Calu3 (cell line): ENCODE measurements at regions of chr5 and their contacts with region 1.

Region 1: DNA sequence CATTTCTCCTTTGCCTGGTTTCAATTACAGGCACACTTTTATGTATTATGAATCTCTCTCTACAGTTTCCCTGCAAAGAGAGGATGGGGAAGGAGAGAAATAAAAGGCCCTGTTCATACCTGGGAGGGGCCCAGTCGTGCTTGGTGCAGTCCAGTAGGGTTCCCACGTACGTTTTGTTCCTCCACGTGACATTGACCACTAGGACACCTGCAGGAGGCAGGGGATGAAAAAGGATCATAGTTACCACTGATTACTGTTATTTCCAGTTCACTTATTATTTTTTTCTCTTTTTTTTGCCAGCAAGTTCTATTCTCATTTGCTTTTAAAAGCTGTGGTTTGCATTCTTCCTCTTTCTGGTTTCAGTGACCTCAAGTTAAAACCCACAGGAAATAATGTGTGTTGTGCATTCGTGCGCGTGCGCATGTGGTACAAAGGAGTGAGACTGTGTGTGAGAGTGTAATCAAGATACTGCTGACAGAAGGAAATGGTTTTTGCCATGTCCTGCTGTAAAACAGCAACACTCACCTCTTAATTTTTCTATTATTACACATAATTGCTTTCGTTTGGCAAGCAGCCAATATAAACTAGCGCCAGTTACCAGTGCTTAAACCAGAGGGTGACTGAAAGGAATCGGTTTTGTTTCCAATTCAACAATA is 96.8 kb downstream of the ZNF608 start:
- DNase-seq: peak; percentile 75
- H3K4me3 Mint-ChIP-seq: peak overlapping the region; percentile 92
- H3K27ac Mint-ChIP-seq: peak overlapping the region; percentile 83
- H3K4me1 Mint-ChIP-seq: peaks cover 60% of the 10 kb centered on the region
- H3K27me3 Mint-ChIP-seq: no peaks in the 10 kb centered on the region
- CTCF ChIP-seq: no peak

Region 2: DNA sequence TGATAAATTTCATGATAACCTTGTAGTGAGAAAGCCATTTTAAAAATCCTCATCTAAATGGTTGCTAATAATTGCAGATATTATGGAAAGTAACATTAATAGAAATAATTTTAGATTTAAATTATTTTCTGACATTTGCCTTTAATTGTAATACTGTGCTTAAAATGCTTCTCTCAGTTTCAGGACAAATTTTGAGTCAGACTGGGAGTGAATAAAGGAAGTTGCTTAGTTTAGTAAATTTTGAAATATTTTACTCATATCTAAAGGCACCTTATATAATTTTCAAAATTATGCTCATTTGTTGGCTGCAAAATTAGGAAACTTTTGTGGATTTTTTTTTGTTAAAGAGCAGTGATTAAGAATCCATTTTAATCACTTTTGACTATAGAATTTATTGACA is 1043.8 kb before region 1 on chr5:
- CTCF ChIA-PET with region 1: no interaction called
- intact Hi-C with region 1: no loop called
- DNase-seq: no peak
- H3K4me3 Mint-ChIP-seq: no peak overlapping the region
- H3K27ac Mint-ChIP-seq: no peak overlapping the region
- H3K4me1 Mint-ChIP-seq: no peaks in the 10 kb centered on the region
- H3K27me3 Mint-ChIP-seq: no peaks in the 10 kb centered on the region
- CTCF ChIP-seq: no peak

Region 3: GRCh38 chr5:123671042-123671441 is 978.6 kb before region 1 on chr5:
- CTCF ChIA-PET with region 1: no interaction called
- intact Hi-C with region 1: loop called (anchors 5 kb)
- DNase-seq: peak; percentile 47
- H3K4me3 Mint-ChIP-seq: no peak overlapping the region
- H3K27ac Mint-ChIP-seq: no peak overlapping the region
- H3K4me1 Mint-ChIP-seq: no peaks in the 10 kb centered on the region
- H3K27me3 Mint-ChIP-seq: no peaks in the 10 kb centered on the region
- CTCF ChIP-seq: peak; percentile 77

Region 4: GRCh38 chr5:123951186-123951977 is 698.2 kb before region 1 on chr5:
- CTCF ChIA-PET with region 1: no interaction called
- intact Hi-C with region 1: loop called (anchors 10 kb)
- DNase-seq: peak; percentile 65
- H3K4me3 Mint-ChIP-seq: peak overlapping the region; percentile 16
- H3K27ac Mint-ChIP-seq: no peak overlapping the region
- H3K4me1 Mint-ChIP-seq: peaks cover 19% of the 10 kb centered on the region
- H3K27me3 Mint-ChIP-seq: peaks cover 37% of the 10 kb centered on the region
- CTCF ChIP-seq: no peak

Region 5: DNA sequence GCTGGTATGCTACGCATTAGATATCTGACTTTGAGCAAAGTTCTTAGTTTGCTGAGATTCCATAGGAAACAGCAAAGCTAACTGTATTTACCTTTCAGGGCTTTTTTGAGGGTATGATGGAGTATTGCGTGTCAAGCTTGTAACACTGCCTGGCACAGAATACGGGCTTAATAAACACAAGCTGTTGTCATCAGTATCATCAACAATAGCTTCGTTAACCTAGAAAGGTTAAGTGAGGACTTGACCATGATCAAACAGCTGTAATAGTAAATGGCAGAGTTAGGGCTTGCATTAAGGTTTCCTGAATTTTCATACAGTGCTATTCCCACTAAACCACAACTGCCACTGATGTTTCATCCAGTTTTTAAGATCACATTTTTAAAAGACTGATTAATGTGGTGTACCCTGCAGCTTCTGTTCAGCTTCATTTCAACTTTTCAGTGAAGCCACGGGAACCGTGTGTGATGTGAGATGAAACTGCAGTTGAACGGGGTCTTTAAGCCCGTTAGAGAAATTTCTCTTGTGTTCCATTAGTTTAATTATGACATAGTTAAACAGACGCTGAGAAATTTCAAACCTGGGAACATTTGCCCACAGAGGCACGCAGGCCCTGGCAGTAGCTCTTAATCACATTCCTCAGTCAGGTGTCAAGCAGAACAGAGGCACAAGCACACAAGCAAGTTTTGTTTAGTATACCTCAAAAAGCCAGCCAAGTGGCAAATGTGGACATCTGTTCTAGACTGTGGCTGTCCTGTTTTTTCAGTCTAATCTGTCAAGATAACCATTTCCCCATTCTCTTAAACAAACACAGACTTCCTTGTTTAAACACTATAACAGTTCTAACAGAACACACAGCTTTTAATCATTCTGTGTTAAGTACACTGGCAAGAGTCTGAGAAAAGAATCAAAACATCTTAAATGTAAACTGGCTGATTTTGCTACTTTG is 50.3 kb before region 1 on chr5:
- CTCF ChIA-PET with region 1: no interaction called
- intact Hi-C with region 1: loop called (anchors 2 kb)
- DNase-seq: peak; percentile 67
- H3K4me3 Mint-ChIP-seq: peak overlapping the region; percentile 24
- H3K27ac Mint-ChIP-seq: peak overlapping the region; percentile 74
- H3K4me1 Mint-ChIP-seq: peaks cover 43% of the 10 kb centered on the region
- H3K27me3 Mint-ChIP-seq: no peaks in the 10 kb centered on the region
- CTCF ChIP-seq: no peak

Region 6: GRCh38 chr5:124859027-124859426 is 209.4 kb after region 1 on chr5:
- CTCF ChIA-PET with region 1: no interaction called
- intact Hi-C with region 1: no loop called
- DNase-seq: no peak
- H3K4me3 Mint-ChIP-seq: no peak overlapping the region
- H3K27ac Mint-ChIP-seq: no peak overlapping the region
- H3K4me1 Mint-ChIP-seq: no peaks in the 10 kb centered on the region
- H3K27me3 Mint-ChIP-seq: no peaks in the 10 kb centered on the region
- CTCF ChIP-seq: no peak

Region 7: GRCh38 chr5:125835293-125836172 is 1185.9 kb after region 1 on chr5:
- CTCF ChIA-PET with region 1: no interaction called
- intact Hi-C with region 1: loop called (anchors 10 kb)
- DNase-seq: peak; percentile 62
- H3K4me3 Mint-ChIP-seq: no peak overlapping the region
- H3K27ac Mint-ChIP-seq: no peak overlapping the region
- H3K4me1 Mint-ChIP-seq: peaks cover 9% of the 10 kb centered on the region
- H3K27me3 Mint-ChIP-seq: no peaks in the 10 kb centered on the region
- CTCF ChIP-seq: peak; percentile 73